ENCODE measurements at regions of chr16 and their contacts with region 1.

Region 1: DNA sequence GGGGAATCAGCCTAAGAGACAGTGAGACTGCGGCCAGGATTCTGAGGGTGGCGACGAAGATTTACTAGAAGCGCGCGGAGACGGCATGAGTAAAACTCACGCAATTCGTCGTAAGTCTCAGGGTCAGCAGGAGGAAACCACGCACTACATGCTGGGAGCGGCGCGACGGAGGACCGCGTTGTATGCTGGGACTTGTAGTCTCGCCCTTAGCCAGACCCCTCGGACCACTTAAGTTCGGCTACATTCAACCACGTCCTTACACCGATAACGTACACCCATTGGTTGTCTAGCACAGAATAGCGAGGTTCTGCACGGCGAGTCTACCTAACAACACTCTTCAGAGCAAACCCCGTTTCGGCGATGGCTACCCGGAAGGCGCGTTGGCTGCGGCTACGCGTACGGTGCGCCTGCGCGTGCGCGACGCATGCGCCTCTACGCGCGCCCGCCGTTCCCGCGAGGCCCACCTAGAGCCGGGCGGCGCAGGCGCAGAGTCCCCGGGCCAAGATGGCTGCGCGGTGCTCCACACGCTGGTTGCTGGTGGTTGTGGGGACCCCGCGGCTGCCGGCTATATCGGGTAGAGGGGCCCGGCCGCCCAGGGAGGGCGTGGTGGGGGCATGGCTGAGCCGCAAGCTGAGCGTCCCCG is at the start of gene DNAJA3:
- DNase-seq: peak; percentile 82 to 98 (median 90)
- ATAC-seq: peak; percentile 84
- H3K4me3 ChIP-seq: peak within 1 kb of the TSS; percentile 71
- H3K4me3 Mint-ChIP-seq: peak within 1 kb of the TSS; percentile 91
- H3K27ac ChIP-seq: peak within 1 kb of the TSS; percentile 93 to 99
- H3K27ac Mint-ChIP-seq: peak within 1 kb of the TSS; percentile 99
- H3K4me1 ChIP-seq: peaks cover 34% of the 10 kb centered on the region
- H3K4me1 Mint-ChIP-seq: peaks cover 27% of the 10 kb centered on the region
- H3K27me3 ChIP-seq: no peaks in the 10 kb centered on the region
- H3K27me3 Mint-ChIP-seq: no peaks in the 10 kb centered on the region
- CTCF ChIP-seq: no peak
- total RNA-seq, gene DNAJA3: 17.2 to 18.8 TPM

Region 2: GRCh38 chr16:2603165-2604015 is 1822.1 kb before region 1 on chr16:
- CTCF ChIA-PET with region 1: no interaction called
- POLR2A ChIA-PET with region 1: no interaction called
- intact Hi-C with region 1: no loop called
- DNase-seq: peak; percentile 57 to 85 (median 70)
- ATAC-seq: peak; percentile 72
- H3K4me3 ChIP-seq: peak overlapping the region; percentile 99
- H3K4me3 Mint-ChIP-seq: peak overlapping the region; percentile 98
- H3K27ac ChIP-seq: peak overlapping the region; percentile 36 to 60
- H3K27ac Mint-ChIP-seq: peak overlapping the region; percentile 80
- H3K4me1 ChIP-seq: peaks cover 9% of the 10 kb centered on the region
- H3K4me1 Mint-ChIP-seq: peaks cover 23% of the 10 kb centered on the region
- H3K27me3 ChIP-seq: no peaks in the 10 kb centered on the region
- H3K27me3 Mint-ChIP-seq: no peaks in the 10 kb centered on the region
- CTCF ChIP-seq: no peak

Region 3: DNA sequence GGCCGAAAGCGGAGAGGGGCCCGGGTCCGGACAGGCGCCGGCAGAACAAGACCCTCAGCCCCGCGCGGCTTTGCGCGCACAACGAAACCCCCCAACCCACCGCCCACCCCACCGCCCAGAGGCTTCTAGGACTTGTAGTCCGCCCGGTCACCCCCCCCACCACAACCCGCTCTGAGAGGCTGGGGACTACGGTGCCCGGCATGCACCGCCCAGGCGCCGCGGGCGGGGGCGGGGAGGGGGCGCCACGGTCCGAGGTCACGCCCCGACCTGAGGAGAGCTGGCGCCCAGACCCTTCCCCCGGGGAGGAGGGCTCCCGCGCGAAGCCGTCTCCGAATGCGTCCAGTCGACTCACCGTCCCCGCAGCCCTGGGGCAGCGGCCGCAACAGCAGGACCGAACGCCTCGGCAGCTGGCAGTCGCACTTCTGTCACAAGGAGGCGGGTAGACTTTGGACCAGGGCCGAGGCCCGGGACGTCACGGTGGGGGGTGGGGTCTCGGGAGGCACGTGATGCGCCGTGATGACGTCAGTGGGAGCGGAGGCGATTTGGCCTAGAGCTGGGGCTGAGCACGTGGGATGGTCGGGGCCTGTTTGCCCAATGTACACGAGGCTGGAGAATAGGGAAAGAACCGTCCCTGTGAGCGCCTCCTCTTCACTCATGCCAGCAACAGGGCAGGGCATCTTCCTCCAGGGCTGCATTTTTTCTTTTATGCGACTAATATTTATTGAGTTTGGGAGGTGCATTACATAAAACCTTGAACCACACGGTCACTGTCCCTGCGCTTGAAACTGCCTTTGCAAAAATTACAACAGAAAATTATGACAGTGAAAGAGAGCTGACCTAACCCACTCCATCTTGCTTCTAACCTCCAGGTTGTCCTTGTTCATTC is 113.1 kb after region 1 on chr16 and contains the start of gene CDIP1:
- CTCF ChIA-PET with region 1: no interaction called
- POLR2A ChIA-PET with region 1: no interaction called
- intact Hi-C with region 1: loop called in 1 of 2 experiments (anchors 2 kb)
- DNase-seq: peak; percentile 89 to 98 (median 94)
- ATAC-seq: peak; percentile 77
- H3K4me3 ChIP-seq: peak within 1 kb of the TSS; percentile 68
- H3K4me3 Mint-ChIP-seq: peak within 1 kb of the TSS; percentile 91
- H3K27ac ChIP-seq: peak within 1 kb of the TSS; percentile 87 to 89
- H3K27ac Mint-ChIP-seq: peak within 1 kb of the TSS; percentile 89
- H3K4me1 ChIP-seq: peaks cover 47% of the 10 kb centered on the region
- H3K4me1 Mint-ChIP-seq: peaks cover 40% of the 10 kb centered on the region
- H3K27me3 ChIP-seq: no peaks in the 10 kb centered on the region
- H3K27me3 Mint-ChIP-seq: no peaks in the 10 kb centered on the region
- CTCF ChIP-seq: no peak
- total RNA-seq, gene CDIP1: 19.5 to 22.4 TPM